Endothelial cell of umbilical vein (primary cell): ENCODE measurements at regions of chr21 and their contacts with region 1.

Region 1: GRCh38 chr21:22575165-22575584 is 1577.0 kb downstream of the NCAM2 start:
- DNase-seq: peak; percentile 93
- H3K4me3 ChIP-seq: no peak overlapping the region
- H3K27ac ChIP-seq: no peak overlapping the region
- H3K4me1 ChIP-seq: peaks cover 3% of the 10 kb centered on the region
- H3K27me3 ChIP-seq: no peaks in the 10 kb centered on the region
- CTCF ChIP-seq: peak; percentile 49 to 51
- POLR2A ChIP-seq: no peak

Region 2: DNA sequence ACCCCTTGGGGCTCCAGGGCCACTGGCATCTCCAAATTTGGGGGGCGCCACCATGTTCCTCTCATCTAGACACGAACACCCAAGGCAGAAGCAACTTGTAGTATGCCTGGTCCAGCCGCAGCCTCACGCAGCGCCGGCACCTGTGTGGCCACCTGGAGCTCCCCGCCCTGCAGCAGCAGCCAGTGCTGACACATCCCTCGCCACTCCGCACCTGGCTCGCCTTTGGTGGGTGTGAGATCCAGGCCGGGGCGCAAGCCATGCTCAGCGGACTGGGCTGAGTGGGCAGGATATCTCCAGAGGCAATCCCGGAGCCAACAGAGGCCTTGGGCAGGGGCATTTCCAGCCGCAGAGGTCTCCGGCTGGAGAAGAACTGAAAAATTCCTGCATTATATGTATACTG is 13.2 kb before region 1 on chr21:
- CTCF ChIA-PET with region 1: no interaction called
- POLR2A ChIA-PET with region 1: no interaction called
- dilution Hi-C with region 1: no loop called
- intact Hi-C with region 1: no loop called
- DNase-seq: no peak
- H3K4me3 ChIP-seq: no peak overlapping the region
- H3K27ac ChIP-seq: no peak overlapping the region
- H3K4me1 ChIP-seq: no peaks in the 10 kb centered on the region
- H3K27me3 ChIP-seq: no peaks in the 10 kb centered on the region
- CTCF ChIP-seq: no peak
- POLR2A ChIP-seq: no peak

Region 3: GRCh38 chr21:22657781-22658180 is 82.6 kb after region 1 on chr21:
- CTCF ChIA-PET with region 1: no interaction called
- POLR2A ChIA-PET with region 1: no interaction called
- dilution Hi-C with region 1: no loop called
- intact Hi-C with region 1: no loop called
- DNase-seq: no peak
- H3K4me3 ChIP-seq: no peak overlapping the region
- H3K27ac ChIP-seq: no peak overlapping the region
- H3K4me1 ChIP-seq: no peaks in the 10 kb centered on the region
- H3K27me3 ChIP-seq: no peaks in the 10 kb centered on the region
- CTCF ChIP-seq: no peak
- POLR2A ChIP-seq: no peak

Region 4: GRCh38 chr21:22691658-22692057 is 116.5 kb after region 1 on chr21:
- CTCF ChIA-PET with region 1: no interaction called
- POLR2A ChIA-PET with region 1: no interaction called
- dilution Hi-C with region 1: no loop called
- intact Hi-C with region 1: no loop called
- DNase-seq: no peak
- H3K4me3 ChIP-seq: no peak overlapping the region
- H3K27ac ChIP-seq: no peak overlapping the region
- H3K4me1 ChIP-seq: no peaks in the 10 kb centered on the region
- H3K27me3 ChIP-seq: no peaks in the 10 kb centered on the region
- CTCF ChIP-seq: no peak
- POLR2A ChIP-seq: no peak

Region 5: GRCh38 chr21:23162198-23162946 is 587.2 kb after region 1 on chr21:
- CTCF ChIA-PET with region 1: no interaction called
- POLR2A ChIA-PET with region 1: no interaction called
- dilution Hi-C with region 1: no loop called
- intact Hi-C with region 1: loop called (anchors 1 kb)
- DNase-seq: peak; percentile 94
- H3K4me3 ChIP-seq: no peak overlapping the region
- H3K27ac ChIP-seq: peak overlapping the region; percentile 89
- H3K4me1 ChIP-seq: peaks cover 18% of the 10 kb centered on the region
- H3K27me3 ChIP-seq: no peaks in the 10 kb centered on the region
- CTCF ChIP-seq: no peak
- POLR2A ChIP-seq: no peak

Region 6: DNA sequence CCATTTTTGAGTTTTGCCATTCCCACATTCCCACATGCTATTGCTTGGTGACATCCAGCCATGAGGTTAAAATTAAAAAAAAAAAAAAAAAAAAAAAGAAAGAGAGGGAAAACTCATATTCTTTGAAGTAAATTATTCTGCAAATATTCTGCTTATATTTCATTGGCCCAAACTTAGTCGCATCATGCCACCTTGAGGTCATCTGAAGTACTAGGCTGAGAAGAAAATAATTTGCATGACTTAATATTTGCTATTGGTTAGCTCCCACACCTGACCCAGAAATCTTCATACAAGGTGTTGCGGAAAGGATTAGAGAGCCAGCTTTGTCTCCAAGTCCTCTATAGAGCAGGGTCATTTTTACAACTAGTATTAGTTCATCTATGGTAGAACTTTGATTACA is 826.1 kb after region 1 on chr21:
- CTCF ChIA-PET with region 1: interaction called, 3 read pairs
- POLR2A ChIA-PET with region 1: no interaction called
- dilution Hi-C with region 1: no loop called
- intact Hi-C with region 1: loop called (anchors 1 kb)
- DNase-seq: peak; percentile 51
- H3K4me3 ChIP-seq: no peak overlapping the region
- H3K27ac ChIP-seq: no peak overlapping the region
- H3K4me1 ChIP-seq: no peaks in the 10 kb centered on the region
- H3K27me3 ChIP-seq: no peaks in the 10 kb centered on the region
- CTCF ChIP-seq: peak; percentile 28 to 32
- POLR2A ChIP-seq: no peak